ENCODE measurements at regions of chr6 and their contacts with region 1.

Region 1: GRCh38 chr6:148947621-148948444 is 201.0 kb downstream of the UST start:
- DNase-seq: peak; percentile 59
- H3K4me3 Mint-ChIP-seq: no peak overlapping the region
- H3K27ac Mint-ChIP-seq: no peak overlapping the region
- H3K4me1 Mint-ChIP-seq: peaks cover 2% of the 10 kb centered on the region
- H3K27me3 Mint-ChIP-seq: peaks cover 27% of the 10 kb centered on the region

Region 2: GRCh38 chr6:148559848-148560433 is 387.9 kb before region 1 on chr6:
- intact Hi-C with region 1: loop called (anchors 2 kb)
- DNase-seq: peak; percentile 48
- H3K4me3 Mint-ChIP-seq: no peak overlapping the region
- H3K27ac Mint-ChIP-seq: no peak overlapping the region
- H3K4me1 Mint-ChIP-seq: peaks cover 8% of the 10 kb centered on the region
- H3K27me3 Mint-ChIP-seq: peaks cover 28% of the 10 kb centered on the region

Region 3: GRCh38 chr6:148578245-148578732 is 369.5 kb before region 1 on chr6:
- intact Hi-C with region 1: loop called (anchors 1 kb)
- DNase-seq: no peak
- H3K4me3 Mint-ChIP-seq: no peak overlapping the region
- H3K27ac Mint-ChIP-seq: no peak overlapping the region
- H3K4me1 Mint-ChIP-seq: no peaks in the 10 kb centered on the region
- H3K27me3 Mint-ChIP-seq: peaks cover 25% of the 10 kb centered on the region

Region 4: GRCh38 chr6:148667395-148667794 is 280.4 kb before region 1 on chr6:
- intact Hi-C with region 1: no loop called
- DNase-seq: no peak
- H3K4me3 Mint-ChIP-seq: no peak overlapping the region
- H3K27ac Mint-ChIP-seq: no peak overlapping the region
- H3K4me1 Mint-ChIP-seq: no peaks in the 10 kb centered on the region
- H3K27me3 Mint-ChIP-seq: peaks cover 3% of the 10 kb centered on the region

Region 5: DNA sequence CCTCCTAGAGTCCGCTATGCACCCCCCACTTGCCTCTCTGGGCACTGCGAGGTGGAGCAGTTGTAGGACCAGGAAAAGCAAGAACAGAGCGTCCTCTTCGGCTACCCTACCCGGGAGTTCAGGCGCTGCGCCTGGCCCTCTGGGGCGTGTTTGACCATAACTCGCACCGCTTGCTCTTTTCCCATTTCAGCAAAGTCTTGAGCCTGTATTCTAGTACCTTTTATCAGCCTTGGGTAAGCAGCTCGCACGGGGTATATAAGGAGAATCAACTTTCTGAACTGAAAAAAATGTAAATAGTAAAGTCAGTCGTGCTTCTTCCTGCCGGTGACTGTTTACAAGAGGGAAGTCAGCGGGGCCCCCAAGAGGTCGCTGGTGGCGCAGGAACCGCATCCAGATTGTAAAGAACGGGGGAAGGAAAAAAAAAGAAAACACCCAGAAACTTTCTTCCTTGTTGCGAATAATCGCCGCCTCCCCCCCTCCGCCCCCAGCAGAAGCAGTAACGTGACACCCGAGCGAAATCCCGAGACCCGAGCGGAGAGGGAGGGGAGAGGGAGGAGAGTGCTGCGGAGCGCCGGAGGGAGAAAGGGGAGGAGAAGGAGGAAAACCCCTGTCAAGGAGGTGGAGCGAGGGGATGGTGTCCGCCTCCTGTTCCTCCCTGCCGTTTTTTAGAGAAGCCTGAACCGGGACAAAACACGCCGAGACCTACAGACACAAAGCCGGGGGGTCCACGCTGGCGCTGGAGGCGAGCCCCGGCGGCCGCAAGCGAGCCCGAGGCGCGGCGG is 201.3 kb before region 1 on chr6 and contains the start of gene UST:
- intact Hi-C with region 1: loop called (anchors 1 kb)
- DNase-seq: peak; percentile 37
- H3K4me3 Mint-ChIP-seq: peak within 1 kb of the TSS; percentile 90
- H3K27ac Mint-ChIP-seq: peak within 1 kb of the TSS; percentile 46
- H3K4me1 Mint-ChIP-seq: peaks cover 13% of the 10 kb centered on the region
- H3K27me3 Mint-ChIP-seq: peaks cover 78% of the 10 kb centered on the region
- total RNA-seq, gene UST: 0.92 and 1.3 TPM in 2 replicates

Region 6: DNA sequence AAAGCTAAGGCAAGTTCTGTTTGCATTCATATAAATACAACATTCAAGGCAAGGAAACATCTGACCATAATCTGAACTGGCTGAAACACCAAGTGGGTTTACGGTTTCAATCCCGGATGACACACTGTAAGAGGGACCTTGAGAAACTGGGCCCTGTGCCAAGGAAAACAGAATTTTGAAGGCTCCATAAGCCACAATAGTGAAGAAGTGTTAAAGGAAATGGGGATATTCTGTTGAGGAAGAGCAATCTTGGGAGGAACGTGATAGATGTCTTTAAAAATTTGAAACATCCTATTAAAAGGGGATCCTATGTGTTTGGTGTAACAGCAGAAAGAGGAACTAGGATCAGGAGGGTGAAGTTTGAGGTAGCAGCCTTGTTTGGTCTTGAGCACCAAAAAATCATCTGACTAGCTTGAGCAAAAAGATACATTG is 287.3 kb after region 1 on chr6:
- intact Hi-C with region 1: no loop called
- DNase-seq: no peak
- H3K4me3 Mint-ChIP-seq: no peak overlapping the region
- H3K27ac Mint-ChIP-seq: peak overlapping the region; percentile 99
- H3K4me1 Mint-ChIP-seq: peaks cover 60% of the 10 kb centered on the region
- H3K27me3 Mint-ChIP-seq: no peaks in the 10 kb centered on the region

Region 7: DNA sequence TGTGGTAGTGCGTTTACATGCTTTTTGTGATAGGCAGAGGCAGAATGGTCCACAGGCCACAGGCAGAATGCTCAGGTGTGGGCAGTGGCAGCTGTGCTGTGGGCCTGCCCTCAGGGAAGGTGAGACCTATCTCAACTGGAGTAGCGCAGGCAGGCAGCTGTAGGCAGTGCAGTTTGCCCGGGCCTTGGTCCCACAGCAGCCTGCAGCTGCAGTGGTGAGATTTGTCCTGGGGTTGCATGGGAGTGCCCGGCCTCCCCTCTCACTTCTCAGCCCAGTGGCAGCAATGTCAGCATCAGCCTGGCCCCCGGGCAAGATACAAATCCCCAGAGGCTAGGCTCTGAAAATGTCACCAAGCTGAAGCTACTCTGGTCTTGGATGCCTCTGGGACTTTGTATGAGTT is 604.1 kb after region 1 on chr6:
- intact Hi-C with region 1: no loop called
- DNase-seq: no peak
- H3K4me3 Mint-ChIP-seq: no peak overlapping the region
- H3K27ac Mint-ChIP-seq: no peak overlapping the region
- H3K4me1 Mint-ChIP-seq: peaks cover 10% of the 10 kb centered on the region
- H3K27me3 Mint-ChIP-seq: peaks cover 19% of the 10 kb centered on the region